A673 (cell line): ENCODE measurements at regions of chr5 and their contacts with region 1.

Region 1: GRCh38 chr5:112848116-112848811 is 12.8 kb upstream of the SRP19 start:
- DNase-seq: peak; percentile 82
- H3K4me3 ChIP-seq: no peak overlapping the region
- H3K27ac ChIP-seq: no peak overlapping the region
- H3K4me1 ChIP-seq: peaks cover 10% of the 10 kb centered on the region
- H3K27me3 ChIP-seq: no peaks in the 10 kb centered on the region
- CTCF ChIP-seq: peak; percentile 81

Region 2: GRCh38 chr5:111902427-111902826 is 945.8 kb before region 1 on chr5:
- CTCF ChIA-PET with region 1: interaction called, 12 read pairs
- POLR2A ChIA-PET with region 1: no interaction called
- intact Hi-C with region 1: no loop called
- DNase-seq: no peak
- H3K4me3 ChIP-seq: no peak overlapping the region
- H3K27ac ChIP-seq: no peak overlapping the region
- H3K4me1 ChIP-seq: no peaks in the 10 kb centered on the region
- H3K27me3 ChIP-seq: no peaks in the 10 kb centered on the region
- CTCF ChIP-seq: no peak

Region 3: DNA sequence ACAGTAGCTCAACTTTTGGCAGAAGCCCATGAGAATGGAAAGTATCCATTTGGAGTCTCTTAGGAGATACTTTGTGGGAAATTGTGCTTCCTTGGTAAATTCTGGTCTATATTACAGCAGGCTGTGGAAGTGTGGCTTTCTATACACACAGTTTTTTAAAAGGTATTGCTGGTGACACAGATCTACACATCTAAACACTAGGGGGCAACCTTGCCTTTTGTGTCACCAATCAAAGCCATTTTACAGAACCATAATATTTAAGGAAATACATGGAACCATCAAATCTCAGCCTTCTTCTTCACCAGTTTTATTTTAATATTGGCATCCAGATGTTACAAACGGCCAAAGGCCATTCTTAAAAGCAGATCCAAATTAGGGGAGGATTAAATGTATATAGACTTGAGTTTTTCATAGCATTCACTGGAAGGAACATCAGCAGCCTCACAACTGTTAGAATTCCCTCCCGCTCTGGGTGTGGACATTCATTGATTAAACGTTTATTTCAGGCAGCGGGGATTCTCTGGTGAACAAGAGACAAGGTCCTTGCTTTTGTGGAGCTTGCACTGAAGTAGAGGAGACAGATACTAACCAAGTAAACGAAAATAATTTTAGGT is 296.7 kb before region 1 on chr5:
- CTCF ChIA-PET with region 1: interaction called, 10 read pairs
- POLR2A ChIA-PET with region 1: no interaction called
- intact Hi-C with region 1: loop called (anchors 2 kb)
- DNase-seq: peak; percentile 68
- H3K4me3 ChIP-seq: no peak overlapping the region
- H3K27ac ChIP-seq: no peak overlapping the region
- H3K4me1 ChIP-seq: no peaks in the 10 kb centered on the region
- H3K27me3 ChIP-seq: no peaks in the 10 kb centered on the region
- CTCF ChIP-seq: peak; percentile 76

Region 4: DNA sequence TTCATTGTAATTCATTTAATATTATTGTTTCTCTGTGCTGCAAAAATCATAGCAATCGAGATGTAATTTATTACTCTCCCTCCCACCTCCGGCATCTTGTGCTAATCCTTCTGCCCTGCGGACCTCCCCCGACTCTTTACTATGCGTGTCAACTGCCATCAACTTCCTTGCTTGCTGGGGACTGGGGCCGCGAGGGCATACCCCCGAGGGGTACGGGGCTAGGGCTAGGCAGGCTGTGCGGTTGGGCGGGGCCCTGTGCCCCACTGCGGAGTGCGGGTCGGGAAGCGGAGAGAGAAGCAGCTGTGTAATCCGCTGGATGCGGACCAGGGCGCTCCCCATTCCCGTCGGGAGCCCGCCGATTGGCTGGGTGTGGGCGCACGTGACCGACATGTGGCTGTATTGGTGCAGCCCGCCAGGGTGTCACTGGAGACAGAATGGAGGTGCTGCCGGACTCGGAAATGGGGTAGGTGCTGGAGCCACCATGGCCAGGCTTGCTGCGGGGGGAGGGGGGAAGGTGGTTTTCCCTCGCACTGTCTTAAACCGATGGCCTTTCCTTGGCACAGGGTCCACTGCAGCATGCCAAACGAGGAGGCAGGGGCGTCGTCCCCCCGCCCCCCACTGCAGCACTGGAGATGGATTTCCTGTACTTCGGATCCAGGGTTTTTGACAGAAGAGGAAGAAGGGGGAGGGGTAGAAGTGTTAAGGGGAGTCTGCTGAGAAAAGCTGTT is 110.6 kb before region 1 on chr5 and contains the start of gene APC:
- CTCF ChIA-PET with region 1: interaction called, 20 read pairs
- POLR2A ChIA-PET with region 1: no interaction called
- intact Hi-C with region 1: no loop called
- DNase-seq: peak; percentile 95
- H3K4me3 ChIP-seq: peak within 1 kb of the TSS; percentile 60
- H3K27ac ChIP-seq: peak within 1 kb of the TSS; percentile 10
- H3K4me1 ChIP-seq: peaks cover 15% of the 10 kb centered on the region
- H3K27me3 ChIP-seq: no peaks in the 10 kb centered on the region
- CTCF ChIP-seq: no peak
- total RNA-seq, gene APC: 36.9 and 39.3 TPM in 2 replicates

Region 5: DNA sequence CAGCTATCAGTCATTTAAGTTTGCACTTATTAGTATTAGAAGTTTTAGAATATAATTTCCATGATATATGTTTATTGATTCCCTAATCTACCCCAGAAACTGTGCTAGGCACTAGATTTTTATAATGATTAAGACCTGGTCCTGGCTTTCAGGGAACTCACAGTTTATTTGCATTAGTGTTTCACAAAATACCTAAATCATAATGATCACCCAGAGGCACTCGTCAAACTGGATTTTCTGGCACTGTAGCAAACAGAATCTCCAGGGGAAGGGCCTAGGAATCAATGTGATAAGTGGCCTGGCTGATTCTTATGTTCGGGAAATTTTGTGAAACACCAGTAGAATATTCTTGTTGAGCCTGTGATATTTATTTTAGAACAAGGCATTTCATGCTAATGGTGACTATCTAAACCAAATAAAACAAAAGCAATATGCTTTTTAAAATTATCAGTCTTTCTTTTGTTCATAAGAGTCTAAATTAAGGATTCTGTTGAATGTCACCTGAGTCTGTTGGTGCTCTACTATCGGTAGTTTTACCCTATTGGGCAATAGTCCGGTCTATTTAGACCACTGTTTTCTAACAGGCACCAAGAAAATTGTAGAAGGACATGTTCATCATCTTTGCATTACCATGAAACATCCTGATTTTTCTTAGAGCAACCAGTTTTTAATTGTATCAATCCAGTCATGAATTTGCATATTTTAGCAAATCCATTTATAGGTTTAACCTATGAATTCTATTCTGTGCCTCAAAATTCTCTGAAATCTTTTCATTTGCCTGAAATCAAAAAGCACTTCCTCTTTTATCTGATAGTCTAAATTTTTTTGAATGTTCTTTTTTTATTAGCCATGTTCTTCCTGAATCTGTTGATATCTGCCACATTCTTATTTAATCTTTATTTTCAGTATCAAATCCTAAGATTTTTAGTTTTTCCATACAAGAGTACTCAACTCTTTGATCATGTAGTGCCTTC is 24.4 kb before region 1 on chr5:
- CTCF ChIA-PET with region 1: interaction called, 14 read pairs
- POLR2A ChIA-PET with region 1: no interaction called
- intact Hi-C with region 1: no loop called
- DNase-seq: no peak
- H3K4me3 ChIP-seq: no peak overlapping the region
- H3K27ac ChIP-seq: no peak overlapping the region
- H3K4me1 ChIP-seq: no peaks in the 10 kb centered on the region
- H3K27me3 ChIP-seq: no peaks in the 10 kb centered on the region
- CTCF ChIP-seq: no peak

Region 6: DNA sequence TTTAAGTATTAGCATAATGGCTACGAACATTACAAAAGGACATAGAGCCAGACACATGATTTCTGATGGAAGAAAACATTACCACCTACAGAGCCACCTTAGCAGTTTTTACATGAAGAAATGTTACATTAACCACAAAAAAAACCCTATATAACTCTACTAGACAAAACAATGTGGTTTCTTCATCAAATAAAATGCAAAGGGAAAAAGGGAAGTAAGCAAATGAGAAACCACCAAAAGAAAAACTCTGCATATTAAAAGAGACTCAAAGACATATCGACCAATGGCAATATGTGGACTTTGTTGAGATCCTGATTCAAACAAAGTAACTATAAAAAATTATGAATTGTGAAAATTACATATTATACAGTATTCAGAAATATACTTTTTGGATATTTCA is 453.9 kb after region 1 on chr5:
- CTCF ChIA-PET with region 1: no interaction called
- POLR2A ChIA-PET with region 1: no interaction called
- intact Hi-C with region 1: no loop called
- DNase-seq: no peak
- H3K4me3 ChIP-seq: no peak overlapping the region
- H3K27ac ChIP-seq: no peak overlapping the region
- H3K4me1 ChIP-seq: no peaks in the 10 kb centered on the region
- H3K27me3 ChIP-seq: peaks cover 19% of the 10 kb centered on the region
- CTCF ChIP-seq: no peak

Region 7: DNA sequence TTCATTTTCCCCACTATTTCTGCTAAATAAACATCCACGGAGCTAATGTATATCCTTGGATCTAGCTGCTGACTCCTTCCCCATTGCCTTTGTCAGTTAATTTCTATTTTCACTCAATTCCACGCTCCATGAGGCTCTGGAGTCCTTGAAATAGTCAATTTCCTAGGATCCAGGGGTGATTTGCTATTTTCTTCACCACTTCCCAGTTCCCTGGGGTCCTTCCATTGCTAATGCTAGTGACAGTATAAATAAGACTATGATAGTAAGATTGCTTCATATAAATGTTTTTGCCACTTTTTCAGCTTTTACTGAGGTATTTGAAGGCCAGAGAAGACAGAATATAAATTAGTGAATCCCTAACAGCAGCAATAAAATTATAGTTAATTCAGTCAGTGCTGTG is 573.4 kb after region 1 on chr5:
- CTCF ChIA-PET with region 1: interaction called, 17 read pairs
- POLR2A ChIA-PET with region 1: no interaction called
- intact Hi-C with region 1: no loop called
- DNase-seq: no peak
- H3K4me3 ChIP-seq: no peak overlapping the region
- H3K27ac ChIP-seq: no peak overlapping the region
- H3K4me1 ChIP-seq: no peaks in the 10 kb centered on the region
- H3K27me3 ChIP-seq: no peaks in the 10 kb centered on the region
- CTCF ChIP-seq: no peak